HEK293 (cell line): ENCODE measurements at regions of chr1 and their contacts with region 1.

Region 1: GRCh38 chr1:56696663-56697062 is 51.5 kb downstream of the PRKAA2 start:
- H3K4me3 ChIP-seq: no peak overlapping the region
- H3K27ac ChIP-seq: no peak overlapping the region
- H3K4me1 ChIP-seq: no peaks in the 10 kb centered on the region
- CTCF ChIP-seq: no peak

Region 2: GRCh38 chr1:56676571-56677035 is 20.1 kb before region 1 on chr1:
- CTCF ChIA-PET with region 1: no interaction called
- POLR2A ChIA-PET with region 1: no interaction called
- H3K4me3 ChIP-seq: no peak overlapping the region
- H3K27ac ChIP-seq: no peak overlapping the region; the same call in 1 of the 2 replicates
- H3K4me1 ChIP-seq: peaks cover 4% of the 10 kb centered on the region; the same call in 1 of the 2 replicates
- CTCF ChIP-seq: no peak

Region 3: DNA sequence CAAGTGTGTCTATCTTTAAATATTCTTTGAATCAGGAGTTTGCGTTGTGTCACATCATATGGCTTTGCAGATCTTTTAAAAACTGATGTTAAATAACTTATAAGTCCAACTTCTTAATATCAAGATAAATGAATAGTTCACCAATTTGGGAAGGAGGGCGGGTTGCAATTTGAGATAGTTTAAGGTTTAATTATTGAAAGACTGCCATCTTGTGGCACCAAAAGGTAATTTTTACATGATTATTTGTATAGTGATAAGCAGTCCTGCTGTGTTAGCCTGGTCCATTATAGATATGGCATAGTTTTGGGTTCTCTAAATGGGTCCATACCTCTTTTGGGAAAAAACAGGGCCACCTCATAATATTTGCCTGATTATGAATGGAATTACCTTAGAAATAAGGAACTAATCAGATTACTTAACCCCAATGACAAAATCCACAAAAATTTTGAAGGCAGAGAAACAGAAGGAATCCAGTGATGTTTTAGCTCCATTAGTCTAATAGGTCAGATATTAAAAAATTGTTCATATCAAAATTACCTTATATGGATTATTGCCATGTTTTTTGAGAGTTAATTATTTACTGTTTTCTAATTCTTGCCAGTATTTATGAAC is 12.7 kb after region 1 on chr1:
- CTCF ChIA-PET with region 1: interaction called, 16 read pairs
- POLR2A ChIA-PET with region 1: no interaction called
- H3K4me3 ChIP-seq: no peak overlapping the region
- H3K27ac ChIP-seq: no peak overlapping the region
- H3K4me1 ChIP-seq: peaks cover 19% of the 10 kb centered on the region
- CTCF ChIP-seq: no peak